ENCODE measurements at regions of chr1 and their contacts with region 1.

Region 1: GRCh38 chr1:26233903-26234643 is at the start of gene CEP85:
- DNase-seq: peak; percentile 96
- ATAC-seq: peak; percentile 99
- H3K4me3 ChIP-seq: peak within 1 kb of the TSS; percentile 95
- H3K27ac ChIP-seq: peak within 1 kb of the TSS; percentile 98
- H3K4me1 ChIP-seq: peaks cover 28% of the 10 kb centered on the region
- H3K27me3 ChIP-seq: no peaks in the 10 kb centered on the region
- CTCF ChIP-seq: peak; percentile 95
- total RNA-seq, gene CEP85: 51.8 TPM

Region 2: GRCh38 chr1:26169669-26170471 is 64.2 kb before region 1 on chr1 and contains the start of gene ZNF593:
- CTCF ChIA-PET with region 1: interaction called, 10 read pairs
- POLR2A ChIA-PET with region 1: no interaction called
- in situ Hi-C with region 1: no loop called
- intact Hi-C with region 1: no loop called
- DNase-seq: peak; percentile 61
- ATAC-seq: peak; percentile 97
- H3K4me3 ChIP-seq: peak within 1 kb of the TSS; percentile 87 to 95
- H3K27ac ChIP-seq: peak within 1 kb of the TSS; percentile 93
- H3K4me1 ChIP-seq: peaks cover 17% of the 10 kb centered on the region
- H3K27me3 ChIP-seq: no peaks in the 10 kb centered on the region
- CTCF ChIP-seq: peak; percentile 98
- total RNA-seq, gene ZNF593: 108 TPM

Region 3: DNA sequence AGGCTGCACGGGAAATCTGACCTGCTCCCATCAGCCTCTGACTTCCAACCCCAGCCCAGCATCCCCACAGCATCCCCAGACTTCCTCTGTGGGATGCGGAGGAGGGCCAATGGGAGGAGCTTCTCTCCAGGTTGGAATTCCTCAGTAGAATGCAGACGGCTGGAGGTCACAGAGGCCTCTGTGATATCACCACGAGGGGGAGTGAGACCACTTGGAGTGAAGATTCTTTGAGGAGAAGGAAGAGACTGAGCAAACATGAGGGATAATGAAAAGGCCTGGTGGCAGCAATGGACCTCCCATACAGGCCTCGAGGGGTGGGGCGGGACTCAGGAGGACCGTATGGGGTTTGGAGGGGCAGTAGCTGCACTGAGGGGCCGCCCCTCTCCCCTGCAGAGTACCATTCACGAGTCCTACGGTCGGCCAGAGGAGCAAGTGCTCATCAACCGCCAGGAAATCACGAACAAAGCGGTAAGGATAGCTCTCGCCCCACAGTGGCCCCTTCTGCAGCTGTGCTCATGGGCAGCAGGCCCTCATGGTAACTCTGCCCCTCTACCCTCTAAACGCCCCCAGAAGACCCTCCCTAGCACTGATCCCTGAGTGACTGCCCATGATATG is 43.6 kb before region 1 on chr1 and contains the start of gene CATSPER4:
- CTCF ChIA-PET with region 1: interaction called, 10 read pairs
- POLR2A ChIA-PET with region 1: no interaction called
- in situ Hi-C with region 1: no loop called
- intact Hi-C with region 1: no loop called
- DNase-seq: no peak
- ATAC-seq: peak; percentile 66
- H3K4me3 ChIP-seq: no peak within 1 kb of the TSS
- H3K27ac ChIP-seq: no peak within 1 kb of the TSS
- H3K4me1 ChIP-seq: no peaks in the 10 kb centered on the region
- H3K27me3 ChIP-seq: no peaks in the 10 kb centered on the region
- CTCF ChIP-seq: no peak
- total RNA-seq, gene CATSPER4: not detected